ENCODE measurements at regions of chr10 and their contacts with region 1.

Region 1: DNA sequence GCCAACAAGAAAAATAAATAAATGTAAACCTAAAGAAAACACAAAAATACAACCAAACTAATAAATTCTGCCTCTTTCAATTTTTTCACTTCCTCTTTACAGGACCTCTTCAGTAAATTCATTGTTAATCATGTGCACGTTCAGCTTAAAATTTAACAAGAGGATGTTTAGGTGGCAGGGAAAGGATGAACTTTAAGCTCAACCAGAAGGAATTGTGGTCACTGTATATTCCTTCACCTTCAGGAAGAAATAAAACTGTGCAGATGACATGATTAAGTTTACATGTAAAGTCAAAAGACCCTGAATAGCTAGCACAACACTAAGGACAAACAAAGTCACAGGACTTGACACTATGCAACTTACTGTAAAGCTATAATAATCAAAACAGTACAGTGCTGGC is 33.0 kb downstream of the KIF5B start:
- DNase-seq: no peak
- ATAC-seq: no peak
- H3K4me3 ChIP-seq: no peak overlapping the region
- H3K4me3 Mint-ChIP-seq: no peak overlapping the region
- H3K27ac ChIP-seq: no peak overlapping the region
- H3K27ac Mint-ChIP-seq: peak overlapping the region; percentile 2 to 73 (median 54)
- H3K4me1 ChIP-seq: no peaks in the 10 kb centered on the region
- H3K4me1 Mint-ChIP-seq: peaks cover 0 to 12% (median 5%) of the 10 kb centered on the region in 7 donors
- H3K27me3 ChIP-seq: no peaks in the 10 kb centered on the region
- H3K27me3 Mint-ChIP-seq: no peaks in the 10 kb centered on the region

Region 2: GRCh38 chr10:31749981-31750731 is 273.1 kb before region 1 on chr10:
- CTCF ChIA-PET with region 1: no interaction called
- POLR2A ChIA-PET with region 1: no interaction called
- intact Hi-C with region 1: no loop called
- DNase-seq: no peak
- ATAC-seq: no peak
- H3K4me3 ChIP-seq: no peak overlapping the region
- H3K4me3 Mint-ChIP-seq: no peak overlapping the region
- H3K27ac ChIP-seq: no peak overlapping the region
- H3K27ac Mint-ChIP-seq: no peak overlapping the region
- H3K4me1 ChIP-seq: peaks cover 0 to 4% of the 10 kb centered on the region in 2 donors
- H3K4me1 Mint-ChIP-seq: peaks cover 0 to 34% (median 6%) of the 10 kb centered on the region in 7 donors
- H3K27me3 ChIP-seq: no peaks in the 10 kb centered on the region
- H3K27me3 Mint-ChIP-seq: no peaks in the 10 kb centered on the region

Region 3: GRCh38 chr10:32005050-32005449 is 18.2 kb before region 1 on chr10:
- CTCF ChIA-PET with region 1: interaction called, 3 read pairs
- POLR2A ChIA-PET with region 1: no interaction called
- intact Hi-C with region 1: loop called in 1 of 2 experiments (anchors 2 kb)
- DNase-seq: peak in 7 of 9 donors; percentile 27 to 46 (median 40)
- ATAC-seq: peak; percentile 79
- H3K4me3 ChIP-seq: no peak overlapping the region
- H3K4me3 Mint-ChIP-seq: no peak overlapping the region
- H3K27ac ChIP-seq: no peak overlapping the region
- H3K27ac Mint-ChIP-seq: peak overlapping the region in 4 of 9 donors; percentile 36 to 85 (median 76)
- H3K4me1 ChIP-seq: no peaks in the 10 kb centered on the region
- H3K4me1 Mint-ChIP-seq: peaks cover 0 to 20% (median 13%) of the 10 kb centered on the region in 7 donors
- H3K27me3 ChIP-seq: no peaks in the 10 kb centered on the region
- H3K27me3 Mint-ChIP-seq: no peaks in the 10 kb centered on the region

Region 4: GRCh38 chr10:32084185-32084851 is 61.1 kb after region 1 on chr10:
- CTCF ChIA-PET with region 1: no interaction called
- POLR2A ChIA-PET with region 1: no interaction called
- intact Hi-C with region 1: no loop called
- DNase-seq: no peak
- ATAC-seq: no peak
- H3K4me3 ChIP-seq: no peak overlapping the region
- H3K4me3 Mint-ChIP-seq: no peak overlapping the region
- H3K27ac ChIP-seq: no peak overlapping the region
- H3K27ac Mint-ChIP-seq: no peak overlapping the region
- H3K4me1 ChIP-seq: no peaks in the 10 kb centered on the region
- H3K4me1 Mint-ChIP-seq: no peaks in the 10 kb centered on the region
- H3K27me3 ChIP-seq: no peaks in the 10 kb centered on the region
- H3K27me3 Mint-ChIP-seq: peaks cover 0 to 6% (median 0%) of the 10 kb centered on the region in 5 donors